Transverse colon (tissue), 4 donors: ENCODE measurements at regions of chr1 and their contacts with region 1.

Region 1: DNA sequence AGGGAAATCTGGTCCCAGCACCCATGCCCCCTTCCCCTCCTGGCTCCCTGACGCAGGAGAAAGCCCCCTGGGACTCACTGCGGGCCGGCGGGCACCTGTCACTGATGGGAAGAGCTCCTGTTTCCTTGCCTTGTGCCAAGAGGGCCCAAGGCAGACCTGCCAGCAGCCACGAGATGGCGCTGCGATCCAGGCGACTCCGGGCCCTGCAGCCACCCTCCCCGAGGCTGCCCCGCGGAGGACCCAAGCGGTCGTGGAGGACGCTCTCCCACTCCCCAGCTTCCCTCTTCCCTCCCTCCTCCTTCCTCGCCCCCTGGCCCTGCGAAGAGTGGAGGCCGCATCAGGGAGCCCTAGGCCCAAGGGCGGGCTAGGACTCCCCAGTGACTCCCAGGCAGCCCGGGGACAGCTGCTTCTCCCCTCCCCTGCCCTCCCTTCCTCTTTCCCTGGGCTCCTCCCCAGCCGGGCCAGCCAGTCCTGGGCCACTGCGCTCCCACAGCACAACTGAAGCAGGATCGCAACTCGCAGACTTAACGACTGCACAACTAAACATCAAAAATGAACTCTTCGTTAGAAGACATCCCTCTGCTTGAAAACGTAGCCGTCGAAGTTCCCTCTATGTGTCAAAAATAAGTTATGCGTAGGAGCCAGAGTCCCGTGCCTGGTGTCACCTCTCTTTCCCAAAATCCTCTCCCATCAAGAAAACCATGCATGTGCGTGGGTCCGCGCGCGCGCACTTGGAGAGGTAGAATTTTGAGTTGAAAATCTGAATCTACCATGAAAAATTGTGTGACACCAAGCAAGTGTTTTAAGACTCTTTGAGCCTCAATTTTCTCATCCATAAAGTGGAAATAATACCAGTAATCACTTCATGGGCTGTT is 34.2 kb downstream of the BATF3 start:
- DNase-seq: peak; percentile 84
- H3K4me3 ChIP-seq: peak overlapping the region; percentile 35 to 70 (median 46)
- H3K27ac ChIP-seq: peak overlapping the region; percentile 55 to 75 (median 68)
- H3K4me1 ChIP-seq: peaks cover 3 to 29% (median 20%) of the 10 kb centered on the region in 4 donors
- H3K27me3 ChIP-seq: peaks cover 2% of the 10 kb centered on the region
- CTCF ChIP-seq: peak; percentile 93 to 98 (median 95)
- EP300 ChIP-seq: no peak
- POLR2A ChIP-seq: no peak

Region 2: GRCh38 chr1:212749821-212750535 is 84.5 kb after region 1 on chr1:
- in situ Hi-C with region 1: loop called in 1 of 4 experiments (anchors 25 kb)
- intact Hi-C with region 1: no loop called
- DNase-seq: no peak
- H3K4me3 ChIP-seq: no peak overlapping the region
- H3K27ac ChIP-seq: peak overlapping the region in 1 of 4 donors; percentile 30
- H3K4me1 ChIP-seq: peaks cover 0 to 36% (median 7%) of the 10 kb centered on the region in 4 donors
- H3K27me3 ChIP-seq: no peaks in the 10 kb centered on the region
- CTCF ChIP-seq: peak; percentile 44 to 75 (median 63)
- EP300 ChIP-seq: no peak
- POLR2A ChIP-seq: no peak

Region 3: GRCh38 chr1:212782422-212783154 is 117.1 kb after region 1 on chr1:
- in situ Hi-C with region 1: loop called in 1 of 4 experiments (anchors 25 kb)
- intact Hi-C with region 1: loop called (anchors 10 kb)
- DNase-seq: no peak
- H3K4me3 ChIP-seq: no peak overlapping the region
- H3K27ac ChIP-seq: no peak overlapping the region
- H3K4me1 ChIP-seq: no peaks in the 10 kb centered on the region
- H3K27me3 ChIP-seq: no peaks in the 10 kb centered on the region
- CTCF ChIP-seq: peak; percentile 50 to 66 (median 61)
- EP300 ChIP-seq: no peak
- POLR2A ChIP-seq: no peak

Region 4: DNA sequence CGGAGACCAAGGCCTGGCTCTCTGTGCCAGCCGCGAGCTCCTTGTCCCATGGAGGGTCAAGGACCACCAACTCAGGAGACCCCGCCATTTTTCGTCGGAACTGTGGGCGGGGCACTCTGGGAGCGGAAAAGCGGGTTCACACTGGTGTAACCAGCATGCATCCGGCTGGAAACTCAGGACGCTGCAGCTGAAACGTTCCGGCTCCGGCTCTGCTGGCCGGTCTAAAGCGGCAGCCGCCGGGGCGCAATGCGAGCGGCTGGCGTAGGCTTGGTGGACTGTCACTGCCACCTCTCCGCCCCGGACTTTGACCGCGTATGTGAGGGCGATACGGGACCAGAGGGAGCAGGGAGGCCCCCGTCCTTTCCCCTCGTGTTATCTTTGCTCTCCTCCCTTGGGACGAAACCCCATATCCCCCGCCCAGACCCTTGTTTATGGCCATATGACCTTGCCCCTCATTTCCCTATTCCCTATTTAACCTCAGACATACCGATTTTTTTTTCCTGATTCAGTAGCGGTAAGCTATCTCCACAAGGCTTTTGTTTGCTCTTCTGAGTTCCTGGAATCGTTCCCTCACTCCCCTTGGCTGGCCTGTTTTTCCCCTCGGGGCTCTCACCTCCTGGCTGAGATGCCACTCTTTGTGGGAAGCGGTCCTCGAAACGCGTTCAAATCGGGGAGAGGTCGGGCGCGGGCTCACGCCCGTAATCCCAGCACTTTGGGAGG is 126.4 kb after region 1 on chr1 and contains the starts of genes NSL1 and TATDN3:
- in situ Hi-C with region 1: loop called in 1 of 4 experiments (anchors 25 kb)
- intact Hi-C with region 1: loop called (anchors 10 kb)
- DNase-seq: peak; percentile 94
- H3K4me3 ChIP-seq: peak within 1 kb of the TSS; percentile 72 to 93 (median 90)
- H3K27ac ChIP-seq: peak within 1 kb of the TSS; percentile 90 to 99 (median 96)
- H3K4me1 ChIP-seq: peaks cover 9 to 47% (median 22%) of the 10 kb centered on the region in 4 donors
- H3K27me3 ChIP-seq: no peaks in the 10 kb centered on the region
- CTCF ChIP-seq: no peak
- EP300 ChIP-seq: no peak
- POLR2A ChIP-seq: peak; percentile 89
- total RNA-seq, gene NSL1: 4.2 to 33.7 (median 28.4) TPM
- total RNA-seq, gene TATDN3: 1.00 to 17.0 (median 4.6) TPM

Region 5: GRCh38 chr1:212981571-212982328 is 316.3 kb after region 1 on chr1:
- in situ Hi-C with region 1: loop called in 3 of 4 experiments (anchors 25 kb)
- intact Hi-C with region 1: no loop called
- DNase-seq: no peak
- H3K4me3 ChIP-seq: no peak overlapping the region
- H3K27ac ChIP-seq: no peak overlapping the region
- H3K4me1 ChIP-seq: peaks cover 0 to 11% (median 1%) of the 10 kb centered on the region in 4 donors
- H3K27me3 ChIP-seq: no peaks in the 10 kb centered on the region
- CTCF ChIP-seq: no peak
- EP300 ChIP-seq: no peak
- POLR2A ChIP-seq: no peak